ENCODE measurements at regions of chr4 and their contacts with region 1.

Region 1: DNA sequence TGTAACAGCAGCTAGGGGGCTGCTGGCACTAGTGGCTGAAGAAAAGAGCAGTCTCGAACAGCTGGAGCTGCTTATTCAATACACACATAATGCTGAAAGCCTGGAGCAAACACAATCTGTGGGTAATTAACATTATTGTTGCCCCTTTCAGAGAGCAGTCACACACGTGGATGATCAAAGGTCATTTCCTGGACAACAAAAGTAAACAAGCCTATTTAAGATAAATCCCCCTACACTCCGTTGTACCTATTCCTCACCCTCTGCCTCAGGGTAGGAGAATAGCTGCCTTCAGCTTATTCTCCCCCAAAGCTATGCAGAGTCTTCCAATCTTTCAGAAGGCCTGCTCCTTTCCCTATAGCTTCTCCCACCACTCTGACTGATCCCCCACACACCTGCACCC is 803.9 kb downstream of the C4orf33 start:
- DNase-seq: no peak
- H3K4me3 ChIP-seq: no peak overlapping the region
- H3K27ac ChIP-seq: no peak overlapping the region
- H3K4me1 ChIP-seq: no peaks in the 10 kb centered on the region
- CTCF ChIP-seq: no peak

Region 2: DNA sequence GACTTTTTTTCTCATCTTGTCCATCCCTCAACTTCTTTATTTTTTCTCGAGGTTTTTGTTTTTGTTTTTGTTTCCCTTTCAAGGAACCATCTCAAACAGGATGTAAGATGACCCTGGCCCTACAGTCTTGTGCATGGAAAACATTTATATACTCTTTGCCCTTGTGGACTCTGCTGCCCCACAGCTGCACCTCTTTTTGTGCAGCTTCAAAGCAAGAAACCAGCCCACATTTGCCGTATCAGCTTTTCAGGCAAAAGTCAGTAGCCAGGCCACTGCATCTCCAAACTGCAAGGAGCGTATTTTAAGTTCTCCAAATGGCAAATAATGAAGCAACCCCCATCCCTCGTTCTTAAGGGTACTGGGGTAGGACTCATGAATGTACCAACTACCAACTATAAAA is 47.4 kb before region 1 on chr4:
- CTCF ChIA-PET with region 1: no interaction called
- POLR2A ChIA-PET with region 1: no interaction called
- intact Hi-C with region 1: loop called (anchors 2 kb)
- DNase-seq: no peak
- H3K4me3 ChIP-seq: no peak overlapping the region
- H3K27ac ChIP-seq: no peak overlapping the region
- H3K4me1 ChIP-seq: no peaks in the 10 kb centered on the region
- CTCF ChIP-seq: no peak

Region 3: DNA sequence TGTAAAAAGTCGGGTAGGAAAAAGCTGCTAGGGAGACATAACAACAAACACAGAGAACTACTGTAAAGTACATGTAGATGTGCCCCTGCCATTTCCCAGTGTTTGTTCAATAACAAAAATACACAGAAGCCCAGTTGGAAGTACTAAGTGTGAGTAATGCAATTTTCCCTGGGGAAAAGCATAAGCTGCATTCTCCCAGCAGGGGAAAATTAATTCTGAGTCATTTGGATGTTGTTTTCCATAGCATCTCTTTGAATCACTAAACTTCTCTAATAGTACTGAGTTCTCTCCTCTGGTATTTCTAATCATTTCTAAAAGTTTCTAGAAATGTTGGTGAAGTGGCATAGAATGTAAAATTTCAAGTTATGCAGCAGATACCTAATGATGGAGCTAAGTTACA is 311.0 kb after region 1 on chr4:
- CTCF ChIA-PET with region 1: no interaction called
- POLR2A ChIA-PET with region 1: no interaction called
- intact Hi-C with region 1: no loop called
- DNase-seq: no peak
- H3K4me3 ChIP-seq: no peak overlapping the region
- H3K27ac ChIP-seq: no peak overlapping the region
- H3K4me1 ChIP-seq: no peaks in the 10 kb centered on the region
- CTCF ChIP-seq: no peak